Left ventricle myocardium inferior (tissue), 1 donor: ENCODE measurements at regions of chr4 and their contacts with region 1.

Region 1: DNA sequence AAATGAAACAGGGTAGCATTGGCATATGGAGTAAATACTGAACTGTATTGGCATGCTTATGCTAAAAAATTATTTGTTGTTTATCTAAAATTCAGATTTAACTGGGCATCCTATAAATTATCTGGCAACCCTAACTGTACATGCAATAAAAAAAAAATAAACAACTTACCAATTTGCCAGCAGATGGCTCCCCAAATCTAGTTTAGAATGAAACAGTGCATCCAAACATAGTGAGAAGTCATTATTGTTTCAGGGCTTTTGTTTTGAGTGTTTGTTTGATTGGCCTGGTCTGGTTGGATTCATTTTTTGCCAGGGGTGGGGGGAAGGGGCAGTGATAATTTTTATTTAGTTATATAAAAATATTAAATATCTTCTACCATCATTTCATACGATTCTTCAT is 12.8 kb upstream of the NSUN7 start:
- DNase-seq: no peak
- H3K4me3 ChIP-seq: no peak overlapping the region
- H3K27ac ChIP-seq: no peak overlapping the region
- H3K4me1 ChIP-seq: peaks cover 2% of the 10 kb centered on the region
- H3K27me3 ChIP-seq: peaks cover 3% of the 10 kb centered on the region
- CTCF ChIP-seq: peak; percentile 44

Region 2: DNA sequence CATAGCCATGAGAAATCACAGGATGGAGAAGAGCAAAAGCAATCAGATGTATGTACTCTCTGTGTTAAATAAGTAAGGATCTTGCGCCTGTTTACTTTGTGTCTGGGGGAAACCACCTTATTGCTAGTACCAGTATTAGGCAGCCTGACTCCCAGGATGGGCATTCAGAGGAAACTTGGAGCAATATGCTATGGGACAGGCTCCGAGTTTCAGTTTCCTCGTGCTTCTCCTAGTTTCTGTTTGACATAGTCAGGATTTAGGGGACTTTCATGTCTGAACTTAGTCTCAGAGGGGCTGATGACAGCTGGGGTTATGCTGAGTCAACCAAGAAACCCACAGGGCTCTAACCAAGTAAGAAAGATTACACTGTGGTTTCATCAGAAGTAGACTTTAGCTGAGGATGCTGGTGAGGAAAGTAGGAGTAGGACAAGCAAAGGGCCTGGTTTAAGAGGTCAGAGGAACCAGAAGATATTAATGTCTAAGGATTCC is 26.4 kb after region 1 on chr4:
- intact Hi-C with region 1: no loop called
- DNase-seq: no peak
- H3K4me3 ChIP-seq: no peak overlapping the region
- H3K27ac ChIP-seq: no peak overlapping the region
- H3K4me1 ChIP-seq: no peaks in the 10 kb centered on the region
- H3K27me3 ChIP-seq: no peaks in the 10 kb centered on the region
- CTCF ChIP-seq: no peak

Region 3: GRCh38 chr4:40897557-40898203 is 160.8 kb after region 1 on chr4:
- intact Hi-C with region 1: loop called (anchors 10 kb)
- DNase-seq: peak; percentile 62
- H3K4me3 ChIP-seq: no peak overlapping the region
- H3K27ac ChIP-seq: no peak overlapping the region
- H3K4me1 ChIP-seq: no peaks in the 10 kb centered on the region
- H3K27me3 ChIP-seq: no peaks in the 10 kb centered on the region
- CTCF ChIP-seq: peak; percentile 82

Region 4: GRCh38 chr4:41550308-41550707 is 813.4 kb after region 1 on chr4:
- intact Hi-C with region 1: no loop called
- DNase-seq: no peak
- H3K4me3 ChIP-seq: no peak overlapping the region
- H3K27ac ChIP-seq: peak overlapping the region; percentile 56
- H3K4me1 ChIP-seq: peaks cover 79% of the 10 kb centered on the region
- H3K27me3 ChIP-seq: no peaks in the 10 kb centered on the region
- CTCF ChIP-seq: no peak